Left colon (tissue), 2 donors: ENCODE measurements at regions of chr17 and their contacts with region 1.

Region 1: DNA sequence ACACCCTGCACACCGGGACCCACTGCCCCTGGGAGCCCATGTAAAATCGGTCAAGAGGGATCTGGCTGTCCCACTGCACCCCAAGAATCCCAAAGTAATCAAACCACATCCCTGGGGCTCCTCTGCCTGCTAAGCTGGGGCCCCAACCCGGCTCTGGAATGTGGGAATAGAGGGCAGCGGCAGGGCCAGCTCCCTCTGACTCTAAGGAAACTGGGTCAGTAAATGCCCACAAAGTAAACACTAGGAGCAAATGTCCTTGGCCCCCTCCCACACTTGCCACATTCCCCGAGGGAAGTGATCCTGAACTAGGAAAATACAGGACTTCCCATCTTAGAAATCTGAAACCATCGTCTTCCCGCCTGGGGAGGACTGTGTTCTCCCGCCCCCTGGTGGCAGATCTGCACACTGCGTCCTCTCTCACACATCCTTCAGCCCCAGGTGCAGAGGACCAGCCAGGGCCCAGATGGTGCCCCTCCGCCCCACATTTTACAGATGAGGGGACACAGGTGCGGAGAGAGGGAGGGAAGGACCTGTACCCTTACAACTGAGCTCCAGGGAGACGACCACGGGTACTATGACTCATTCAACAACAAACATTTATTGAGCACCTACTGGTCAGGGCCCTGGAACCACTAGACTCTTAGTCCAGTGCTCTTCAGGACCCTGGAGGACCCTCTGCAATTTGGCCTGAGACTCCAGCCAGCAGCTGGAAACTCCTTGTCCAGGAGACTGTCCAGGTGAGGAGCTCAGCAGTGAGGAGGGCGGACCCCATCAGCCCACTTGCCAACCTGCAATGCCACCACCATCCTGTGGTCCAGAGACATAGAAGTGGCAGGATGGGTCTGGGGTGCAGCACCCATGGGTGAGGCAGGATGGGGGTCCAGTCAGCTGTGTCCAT is 10.1 kb downstream of the P3H4 start:
- DNase-seq: peak; percentile 71 to 92
- ATAC-seq: peak; percentile 64

Region 2: GRCh38 chr17:41738077-41738735 is 63.4 kb before region 1 on chr17:
- intact Hi-C with region 1: loop called (anchors 2 to 10 kb)
- DNase-seq: peak; percentile 59 to 87
- ATAC-seq: peak; percentile 89